Posterior vena cava (tissue), 2 donors: ENCODE measurements at regions of chr16 and their contacts with region 1.

Region 1: GRCh38 chr16:22217889-22218730 is 12.0 kb downstream of the EEF2K start:
- DNase-seq: no peak

Region 2: GRCh38 chr16:22109258-22109898 is 108.7 kb before region 1 on chr16:
- intact Hi-C with region 1: no loop called
- DNase-seq: no peak

Region 3: GRCh38 chr16:22272870-22273595 is 54.9 kb after region 1 on chr16:
- intact Hi-C with region 1: loop called in 1 of 2 experiments (anchors 10 kb)
- DNase-seq: no peak

Region 4: GRCh38 chr16:22882981-22883380 is 664.9 kb after region 1 on chr16:
- intact Hi-C with region 1: loop called in 1 of 2 experiments (anchors 5 kb)
- DNase-seq: no peak